Calu3 (cell line): ENCODE measurements at regions of chr6 and their contacts with region 1.

Region 1: DNA sequence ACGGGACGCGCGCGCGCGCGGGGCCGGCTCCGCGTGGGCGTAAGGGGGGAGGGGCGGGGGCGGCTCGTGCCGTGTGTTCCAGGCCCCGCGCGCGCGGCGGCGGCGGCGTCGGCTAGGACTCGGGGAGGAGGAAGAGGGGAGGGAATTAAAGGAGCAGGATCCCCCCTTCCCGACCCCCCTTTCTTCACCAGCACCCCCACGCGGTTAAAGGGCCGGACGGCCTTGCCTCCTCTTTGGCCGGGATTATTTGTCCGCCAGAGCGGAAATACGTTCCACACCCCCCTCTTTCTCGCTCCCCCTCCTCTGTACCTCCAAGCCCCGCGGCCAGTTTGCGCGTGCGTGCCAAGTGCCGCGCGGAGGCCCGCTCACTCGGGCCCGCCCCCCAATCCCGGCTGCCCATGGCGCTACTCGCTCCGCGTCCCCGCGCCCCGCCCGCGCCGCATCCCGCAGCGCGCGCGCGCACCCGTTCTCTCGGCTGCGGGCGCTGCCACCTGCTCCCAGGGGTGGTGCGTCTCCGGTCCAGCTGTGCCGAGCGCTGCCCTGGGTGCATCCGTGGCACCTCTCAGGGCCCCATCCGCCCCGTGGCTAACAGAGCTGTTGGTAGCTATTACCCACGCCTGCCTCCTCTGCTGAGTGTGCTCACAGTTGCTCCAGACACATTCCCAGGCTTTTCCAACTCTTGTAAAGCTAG is at the start of gene ZBTB12:
- DNase-seq: peak; percentile 99
- H3K4me3 Mint-ChIP-seq: peak within 1 kb of the TSS; percentile 64
- H3K27ac Mint-ChIP-seq: peak within 1 kb of the TSS; percentile 65
- H3K4me1 Mint-ChIP-seq: peaks cover 41% of the 10 kb centered on the region
- H3K27me3 Mint-ChIP-seq: no peaks in the 10 kb centered on the region
- CTCF ChIP-seq: no peak
- total RNA-seq, gene ZBTB12: 22.6 and 28.1 TPM in 2 replicates

Region 2: GRCh38 chr6:31945507-31946369 is 43.6 kb after region 1 on chr6 and contains the start of gene CFB:
- CTCF ChIA-PET with region 1: interaction called, 30 read pairs
- intact Hi-C with region 1: no loop called
- DNase-seq: peak; percentile 98
- H3K4me3 Mint-ChIP-seq: peak within 1 kb of the TSS; percentile 77
- H3K27ac Mint-ChIP-seq: peak within 1 kb of the TSS; percentile 84
- H3K4me1 Mint-ChIP-seq: peaks cover 84% of the 10 kb centered on the region
- H3K27me3 Mint-ChIP-seq: no peaks in the 10 kb centered on the region
- CTCF ChIP-seq: no peak
- total RNA-seq, gene CFB: 944 and 1,205 TPM in 2 replicates

Region 3: DNA sequence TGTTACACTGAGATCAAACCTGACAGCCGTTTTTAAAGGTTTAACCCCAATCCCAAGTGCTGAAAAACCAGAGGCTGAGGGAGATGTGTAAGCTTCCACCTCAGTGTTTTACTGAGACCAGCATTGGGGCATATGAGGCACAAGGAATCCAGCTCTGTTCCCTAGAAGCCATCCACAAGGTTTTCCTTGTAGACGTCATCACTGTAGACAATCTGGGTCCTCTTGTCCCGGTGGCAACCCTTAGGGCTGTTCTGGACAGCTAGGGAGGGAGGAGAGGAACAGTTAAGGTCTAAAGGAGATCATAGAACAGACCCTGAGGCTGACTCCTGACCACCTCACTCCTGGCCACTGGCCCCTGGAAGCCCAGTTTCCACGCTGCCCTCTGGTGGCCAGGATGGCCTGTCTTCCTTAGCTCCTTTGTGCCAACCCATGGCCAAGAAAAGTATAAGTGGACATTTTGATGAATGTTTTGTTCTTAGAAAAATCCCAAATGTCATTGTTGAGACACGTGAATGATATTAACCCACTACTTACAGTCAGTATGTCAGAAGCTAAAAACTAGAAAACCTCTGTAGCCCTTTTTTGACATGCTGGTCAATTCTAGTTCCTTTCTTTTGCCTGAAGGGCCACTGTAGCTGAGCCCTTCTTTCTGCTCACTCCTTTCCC is 50.2 kb after region 1 on chr6:
- CTCF ChIA-PET with region 1: interaction called, 30 read pairs
- intact Hi-C with region 1: loop called (anchors 1 kb)
- DNase-seq: peak; percentile 92
- H3K4me3 Mint-ChIP-seq: no peak overlapping the region
- H3K27ac Mint-ChIP-seq: peak overlapping the region; percentile 69
- H3K4me1 Mint-ChIP-seq: peaks cover 41% of the 10 kb centered on the region
- H3K27me3 Mint-ChIP-seq: no peaks in the 10 kb centered on the region
- CTCF ChIP-seq: peak; percentile 95

Region 4: GRCh38 chr6:31958741-31959739 is 56.9 kb after region 1 on chr6 and contains the starts of genes NELFE and SKIC2:
- CTCF ChIA-PET with region 1: interaction called, 14 read pairs
- intact Hi-C with region 1: no loop called
- DNase-seq: peak; percentile 100
- H3K4me3 Mint-ChIP-seq: peak within 1 kb of the TSS; percentile 97
- H3K27ac Mint-ChIP-seq: peak within 1 kb of the TSS; percentile 97
- H3K4me1 Mint-ChIP-seq: peaks cover 15% of the 10 kb centered on the region
- H3K27me3 Mint-ChIP-seq: no peaks in the 10 kb centered on the region
- CTCF ChIP-seq: no peak
- total RNA-seq, gene NELFE: 141 and 157 TPM in 2 replicates
- total RNA-seq, gene SKIC2: 182 and 201 TPM in 2 replicates